HCT116 (cell line): ENCODE measurements at regions of chr6 and their contacts with region 1.

Region 1: DNA sequence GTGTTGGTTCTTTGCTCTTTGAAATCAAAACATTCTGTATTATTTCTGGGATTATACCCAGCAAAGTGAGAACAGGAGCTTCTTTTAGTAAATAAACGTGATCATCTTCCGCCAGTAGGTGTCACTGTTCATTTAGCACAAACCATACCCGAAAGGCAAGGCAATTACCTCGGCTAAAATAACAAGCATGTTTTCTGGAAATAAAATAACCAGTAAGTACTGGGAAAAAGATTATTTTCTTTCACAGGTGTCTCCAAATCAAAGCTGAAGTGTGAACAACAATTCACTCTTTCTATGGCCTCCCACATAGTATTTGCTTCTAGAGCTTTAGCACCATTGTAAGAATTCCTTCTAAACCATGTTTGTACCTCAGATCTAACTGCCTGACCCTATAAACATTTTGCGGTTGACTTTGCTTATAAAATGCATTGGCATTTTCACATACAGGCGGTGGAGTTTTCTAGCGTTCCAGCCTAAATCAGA is 144.6 kb upstream of the AGPAT4 start:
- DNase-seq: peak; percentile 68
- ATAC-seq: peak; percentile 84
- H3K4me3 ChIP-seq: no peak overlapping the region
- H3K27ac ChIP-seq: no peak overlapping the region
- H3K4me1 ChIP-seq: no peaks in the 10 kb centered on the region
- H3K27me3 ChIP-seq: 0 out of 2 replicates have a peak, but pooled peaks cover 5% of the 10 kb centered on the region
- CTCF ChIP-seq: peak; percentile 59 to 87 (median 70)
- POLR2A ChIP-seq: no peak
- RAD21 ChIP-seq: peak; percentile 85

Region 2: DNA sequence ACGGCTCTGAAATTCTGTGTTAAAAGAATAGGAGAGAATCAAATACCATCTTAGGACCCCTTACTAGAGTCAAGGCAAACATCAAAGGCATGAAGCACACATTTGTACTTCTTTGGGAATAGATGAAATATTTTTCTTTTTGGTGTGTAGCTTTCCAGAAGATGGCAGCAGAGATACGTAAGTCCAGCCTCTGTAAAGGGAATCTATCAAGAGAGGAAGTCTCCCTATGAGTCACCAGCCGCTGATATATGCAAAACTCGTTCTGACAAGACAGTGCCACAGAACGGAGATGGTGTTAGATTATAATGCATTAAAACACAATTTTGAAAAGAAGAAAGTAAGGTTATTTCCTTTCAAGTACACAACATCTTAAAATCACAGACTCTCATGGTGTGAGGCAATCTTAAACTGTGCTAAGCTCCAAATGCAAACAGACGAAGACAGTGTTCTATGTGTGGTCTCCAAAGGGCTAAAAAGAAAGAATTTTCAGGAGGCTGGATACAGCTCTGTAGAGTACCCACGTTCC is 24.6 kb before region 1 on chr6:
- CTCF ChIA-PET with region 1: interaction called, 12 read pairs
- POLR2A ChIA-PET with region 1: no interaction called
- RAD21 ChIA-PET with region 1: interaction called in 1 of 2 experiments, 3 read pairs
- intact Hi-C with region 1: no loop called
- DNase-seq: peak; percentile 75
- ATAC-seq: peak; percentile 97
- H3K4me3 ChIP-seq: no peak overlapping the region
- H3K27ac ChIP-seq: no peak overlapping the region
- H3K4me1 ChIP-seq: peaks cover 0 to 6% of the 10 kb centered on the region in 2 experiments; a peak in 2 of 4 replicates
- H3K27me3 ChIP-seq: no peaks in the 10 kb centered on the region
- CTCF ChIP-seq: peak; percentile 27 to 76 (median 73); a peak in 4 of 6 replicates
- POLR2A ChIP-seq: no peak
- RAD21 ChIP-seq: peak; percentile 89

Region 3: DNA sequence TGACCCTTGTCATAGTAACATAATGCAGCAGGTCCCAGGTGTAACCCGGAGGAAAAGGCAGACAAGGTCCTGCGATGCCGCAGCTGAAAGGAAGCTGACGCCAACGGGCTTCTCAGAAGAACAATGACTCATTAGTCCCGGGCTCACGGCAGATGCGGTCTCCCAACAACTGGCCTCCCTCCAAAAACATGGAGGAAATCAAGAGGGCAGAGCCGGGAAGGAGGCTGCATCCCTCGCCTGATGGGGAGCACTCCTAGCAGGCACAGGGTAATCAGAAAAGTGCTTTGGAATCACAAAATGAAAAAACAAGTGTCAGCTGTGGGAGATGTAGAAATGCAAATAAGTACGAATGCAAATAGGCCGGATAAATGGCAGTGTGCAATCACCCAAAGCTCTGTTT is 20.6 kb after region 1 on chr6:
- CTCF ChIA-PET with region 1: interaction called, 16 read pairs
- POLR2A ChIA-PET with region 1: no interaction called
- RAD21 ChIA-PET with region 1: no interaction called
- intact Hi-C with region 1: no loop called
- DNase-seq: peak; percentile 40
- ATAC-seq: peak; percentile 77
- H3K4me3 ChIP-seq: peak overlapping the region; percentile 4 to 49; a peak in 2 of 4 replicates
- H3K27ac ChIP-seq: no peak overlapping the region
- H3K4me1 ChIP-seq: peaks cover 14 to 39% of the 10 kb centered on the region in 2 experiments; a peak in 3 of 4 replicates
- H3K27me3 ChIP-seq: no peaks in the 10 kb centered on the region
- CTCF ChIP-seq: no peak
- POLR2A ChIP-seq: no peak
- RAD21 ChIP-seq: no peak

Region 4: GRCh38 chr6:161498359-161498758 is 79.9 kb after region 1 on chr6:
- CTCF ChIA-PET with region 1: interaction called, 28 read pairs
- POLR2A ChIA-PET with region 1: no interaction called
- RAD21 ChIA-PET with region 1: interaction called, 5 to 8 read pairs
- intact Hi-C with region 1: loop called (anchors 1 kb)
- DNase-seq: peak; percentile 66
- ATAC-seq: peak; percentile 98
- H3K4me3 ChIP-seq: no peak overlapping the region
- H3K27ac ChIP-seq: no peak overlapping the region
- H3K4me1 ChIP-seq: no peaks in the 10 kb centered on the region; a peak in 1 of 4 replicates
- H3K27me3 ChIP-seq: no peaks in the 10 kb centered on the region
- CTCF ChIP-seq: peak; percentile 59 to 82 (median 67)
- POLR2A ChIP-seq: no peak
- RAD21 ChIP-seq: peak; percentile 92

Region 5: DNA sequence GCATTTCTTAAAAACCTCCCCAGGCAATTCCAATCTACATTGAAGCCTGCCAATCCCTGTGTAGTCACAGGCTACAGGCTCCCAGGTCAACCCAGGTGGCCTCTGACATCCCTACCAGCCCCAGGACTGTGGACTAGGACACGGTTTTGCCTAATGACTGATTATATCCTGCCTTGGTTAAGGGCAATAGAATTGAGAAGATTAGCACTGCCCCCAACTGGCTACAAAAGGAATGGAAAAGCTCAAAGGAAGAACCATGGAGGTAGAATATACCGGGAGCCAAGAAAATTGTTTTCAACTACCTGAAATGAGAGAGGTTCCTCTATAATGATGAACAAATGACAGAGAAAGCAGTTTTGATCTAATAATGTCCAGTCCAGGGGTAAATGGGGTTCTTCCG is 276.5 kb after region 1 on chr6:
- CTCF ChIA-PET with region 1: interaction called, 10 read pairs
- POLR2A ChIA-PET with region 1: no interaction called
- RAD21 ChIA-PET with region 1: interaction called, 3 to 4 read pairs
- intact Hi-C with region 1: loop called (anchors 2 kb)
- DNase-seq: peak; percentile 7
- ATAC-seq: peak; percentile 87
- H3K4me3 ChIP-seq: no peak overlapping the region
- H3K27ac ChIP-seq: no peak overlapping the region
- H3K4me1 ChIP-seq: no peaks in the 10 kb centered on the region
- H3K27me3 ChIP-seq: no peaks in the 10 kb centered on the region
- CTCF ChIP-seq: peak; percentile 40 to 55 (median 55)
- POLR2A ChIP-seq: no peak
- RAD21 ChIP-seq: peak; percentile 65

Region 6: DNA sequence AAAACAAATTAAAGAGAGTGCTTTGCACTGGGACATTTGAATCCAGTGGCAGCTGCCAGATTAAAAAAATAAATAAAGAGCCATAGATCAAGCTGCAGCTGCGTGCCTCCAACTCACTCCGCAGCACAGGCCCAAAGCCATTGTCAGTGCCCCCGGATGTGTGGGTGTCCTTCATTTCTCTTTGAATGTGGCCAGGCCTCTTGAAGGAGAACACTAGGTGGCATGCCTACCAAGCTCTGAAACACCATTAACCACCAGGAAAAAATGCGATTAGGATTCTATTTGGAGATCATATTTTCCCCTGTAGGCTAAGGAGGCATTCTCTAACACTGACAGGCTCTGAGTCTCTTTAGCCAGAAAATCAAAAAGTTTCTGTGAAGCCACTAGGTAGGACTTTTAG is 759.2 kb after region 1 on chr6:
- CTCF ChIA-PET with region 1: no interaction called
- POLR2A ChIA-PET with region 1: no interaction called
- RAD21 ChIA-PET with region 1: no interaction called
- intact Hi-C with region 1: no loop called
- DNase-seq: no peak
- ATAC-seq: peak; percentile 54; the same call in 1 of the 2 replicates
- H3K4me3 ChIP-seq: no peak overlapping the region
- H3K27ac ChIP-seq: no peak overlapping the region
- H3K4me1 ChIP-seq: no peaks in the 10 kb centered on the region
- H3K27me3 ChIP-seq: no peaks in the 10 kb centered on the region
- CTCF ChIP-seq: no peak
- POLR2A ChIP-seq: no peak
- RAD21 ChIP-seq: no peak